ENCODE measurements at regions of chr16 and their contacts with region 1.

Region 1: DNA sequence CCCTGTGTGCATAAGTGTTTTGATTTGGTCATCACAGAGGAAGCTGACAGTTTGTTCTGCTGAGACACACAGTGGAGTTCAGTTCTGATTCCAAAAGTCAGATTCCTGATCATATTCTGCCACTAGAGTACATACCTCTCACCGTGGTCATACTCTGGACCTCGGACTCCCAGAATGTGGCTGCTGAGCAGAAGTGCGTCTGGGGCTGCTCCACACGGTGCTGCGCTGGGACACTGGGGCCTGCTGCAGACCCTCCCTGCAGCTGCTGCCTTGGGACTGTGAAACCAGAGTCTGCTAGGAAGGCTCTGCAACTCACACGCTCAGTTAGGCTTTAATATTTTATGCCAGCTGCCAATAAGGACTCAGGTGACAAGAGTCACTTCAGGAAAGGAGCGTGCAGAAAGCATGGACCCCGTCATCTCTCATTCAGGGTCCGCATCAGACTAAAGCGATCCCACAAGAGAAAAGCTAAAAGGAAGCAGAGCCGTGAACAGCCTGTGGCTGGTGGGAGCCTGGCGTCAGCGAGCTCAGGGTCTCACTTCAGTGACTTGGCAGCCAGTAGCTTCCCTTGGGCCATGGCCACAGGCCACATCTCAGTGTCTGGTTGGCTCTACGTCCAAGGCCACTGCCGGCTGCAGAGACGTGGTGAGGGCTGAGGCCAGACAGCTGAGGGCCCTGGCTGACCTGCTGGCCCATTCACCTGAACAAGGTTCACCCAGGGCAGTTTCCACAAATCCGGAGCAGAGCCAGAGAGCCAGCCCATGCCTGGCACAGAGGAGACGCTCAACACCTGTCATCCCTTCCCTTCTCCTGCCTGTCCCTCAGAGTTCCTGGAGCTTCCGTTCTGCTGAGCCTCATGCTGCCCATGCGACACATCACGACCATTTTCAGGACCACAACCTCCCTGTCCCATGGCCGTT is 24.7 kb upstream of the KIFC3 start:
- DNase-seq: peak; percentile 94
- ATAC-seq: peak; percentile 93
- H3K4me3 ChIP-seq: peak overlapping the region; percentile 34 to 59 (median 37)
- H3K27ac ChIP-seq: peak overlapping the region; percentile 90
- H3K4me1 ChIP-seq: peaks cover 80% of the 10 kb centered on the region
- H3K27me3 ChIP-seq: no peaks in the 10 kb centered on the region
- CTCF ChIP-seq: peak; percentile 39
- EP300 ChIP-seq: peak; percentile 59 to 76; a peak in 3 of 4 replicates
- POLR2A ChIP-seq: peak; percentile 55 to 79; a peak in 3 of 4 replicates
- RAD21 ChIP-seq: peak; percentile 18; the same call in 1 of the 2 replicates

Region 2: GRCh38 chr16:57802341-57803133 is 24.4 kb before region 1 on chr16 and contains the start of gene KIFC3:
- CTCF ChIA-PET with region 1: interaction called, 5 read pairs
- POLR2A ChIA-PET with region 1: interaction called, 22 read pairs
- in situ Hi-C with region 1: no loop called
- intact Hi-C with region 1: no loop called
- DNase-seq: peak; percentile 79
- ATAC-seq: peak; percentile 46
- H3K4me3 ChIP-seq: peak within 1 kb of the TSS; percentile 77 to 89 (median 82)
- H3K27ac ChIP-seq: peak within 1 kb of the TSS; percentile 73
- H3K4me1 ChIP-seq: peaks cover 83% of the 10 kb centered on the region
- H3K27me3 ChIP-seq: no peaks in the 10 kb centered on the region
- CTCF ChIP-seq: peak; percentile 50; the same call in 1 of the 2 replicates
- EP300 ChIP-seq: peak; percentile 6 to 42; a peak in 2 of 4 replicates
- POLR2A ChIP-seq: peak in 1 of 2 experiments; percentile 45; a peak in 2 of 4 replicates
- RAD21 ChIP-seq: peak; percentile 89
- total RNA-seq, gene KIFC3: 30.0 and 45.3 TPM in 2 replicates

Region 3: GRCh38 chr16:57810197-57811031 is 16.6 kb before region 1 on chr16:
- CTCF ChIA-PET with region 1: no interaction called
- POLR2A ChIA-PET with region 1: interaction called, 37 read pairs
- in situ Hi-C with region 1: no loop called
- intact Hi-C with region 1: loop called (anchors 2 kb)
- DNase-seq: peak; percentile 92
- ATAC-seq: peak; percentile 93
- H3K4me3 ChIP-seq: peak overlapping the region in 1 of 3 experiments; percentile 41; a peak in 2 of 6 replicates
- H3K27ac ChIP-seq: peak overlapping the region; percentile 63
- H3K4me1 ChIP-seq: peaks cover 71% of the 10 kb centered on the region
- H3K27me3 ChIP-seq: no peaks in the 10 kb centered on the region
- CTCF ChIP-seq: peak; percentile 26; the same call in 1 of the 2 replicates
- EP300 ChIP-seq: peak in 1 of 2 experiments; percentile 80; a peak in 2 of 4 replicates
- POLR2A ChIP-seq: peak; percentile 40 to 85; a peak in 3 of 4 replicates
- RAD21 ChIP-seq: no peak

Region 4: DNA sequence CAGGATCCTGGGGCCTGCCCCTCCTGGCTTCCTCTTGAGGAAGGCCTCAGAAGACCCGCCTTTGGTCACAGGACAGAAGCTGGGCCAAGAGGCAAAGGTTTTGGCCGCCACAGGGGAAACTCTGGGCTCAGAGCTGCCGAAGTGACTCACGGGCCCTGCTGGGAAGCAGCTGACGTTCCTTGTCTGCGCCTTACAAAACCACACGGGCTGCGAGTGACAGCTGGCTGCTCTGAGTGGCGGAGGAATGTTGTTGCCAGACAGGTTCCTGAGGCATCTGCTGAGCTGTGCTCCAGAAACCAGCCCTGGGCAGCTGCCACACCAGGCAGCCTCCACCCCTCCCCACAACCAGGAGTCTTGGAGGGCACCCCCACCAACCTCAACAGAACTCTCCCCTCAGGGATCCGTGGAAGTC is 10.6 kb before region 1 on chr16:
- CTCF ChIA-PET with region 1: no interaction called
- POLR2A ChIA-PET with region 1: interaction called, 37 read pairs
- in situ Hi-C with region 1: no loop called
- intact Hi-C with region 1: loop called (anchors 2 kb)
- DNase-seq: no peak
- ATAC-seq: no peak
- H3K4me3 ChIP-seq: no peak overlapping the region
- H3K27ac ChIP-seq: no peak overlapping the region
- H3K4me1 ChIP-seq: peaks cover 43% of the 10 kb centered on the region
- H3K27me3 ChIP-seq: no peaks in the 10 kb centered on the region
- CTCF ChIP-seq: no peak
- EP300 ChIP-seq: no peak
- POLR2A ChIP-seq: no peak
- RAD21 ChIP-seq: no peak

Region 5: GRCh38 chr16:57837305-57838125 is 10.5 kb after region 1 on chr16:
- CTCF ChIA-PET with region 1: no interaction called
- POLR2A ChIA-PET with region 1: interaction called, 8 read pairs
- in situ Hi-C with region 1: no loop called
- intact Hi-C with region 1: loop called (anchors 1 kb)
- DNase-seq: no peak
- ATAC-seq: no peak
- H3K4me3 ChIP-seq: no peak overlapping the region
- H3K27ac ChIP-seq: no peak overlapping the region
- H3K4me1 ChIP-seq: peaks cover 50% of the 10 kb centered on the region
- H3K27me3 ChIP-seq: no peaks in the 10 kb centered on the region
- CTCF ChIP-seq: no peak
- EP300 ChIP-seq: no peak
- POLR2A ChIP-seq: no peak
- RAD21 ChIP-seq: no peak